Activated B cell treated with CpG ODN at 0.5 μM for 24 hours (primary cell): ENCODE measurements at regions of chr22 and their contacts with region 1.

Region 1: DNA sequence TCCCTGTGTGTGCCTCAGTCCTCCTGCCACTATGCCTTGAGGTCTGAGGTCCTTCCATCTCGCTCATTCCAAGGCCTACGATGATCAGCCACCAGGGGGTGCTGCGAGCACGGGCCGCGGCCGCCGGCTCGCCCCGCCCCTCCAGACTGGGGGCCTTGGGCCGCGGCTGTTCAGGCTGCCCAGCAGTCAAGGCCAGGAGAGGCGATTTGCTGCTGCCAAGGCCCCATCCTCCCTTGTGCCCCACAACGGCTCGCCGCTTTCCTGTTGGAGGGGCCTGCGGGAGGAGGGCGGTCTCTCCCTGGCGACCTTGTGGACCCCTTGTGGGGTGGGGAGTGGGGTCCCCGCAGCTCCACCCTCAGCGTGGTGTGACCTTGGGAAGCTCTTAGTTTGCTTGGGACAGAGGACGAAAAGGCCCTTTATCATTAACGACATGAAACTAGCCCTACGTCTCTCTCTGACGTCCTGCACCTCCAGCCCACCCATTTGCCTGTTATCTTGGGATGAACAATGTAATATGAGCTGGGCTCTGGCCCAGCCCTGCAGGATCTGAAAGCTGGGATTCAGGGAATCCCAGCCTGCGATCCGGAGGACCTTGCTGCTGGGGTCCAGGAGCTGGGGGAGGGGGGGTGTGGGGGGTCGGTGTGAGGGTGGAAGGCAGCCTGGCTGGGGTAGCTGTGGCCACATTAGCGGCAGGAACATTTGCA is 5.3 kb upstream of the GALR3 start:
- DNase-seq: peak; percentile 89
- ATAC-seq: peak; percentile 84
- H3K4me3 Mint-ChIP-seq: peak overlapping the region; percentile 52
- H3K27ac Mint-ChIP-seq: no peak overlapping the region
- H3K4me1 Mint-ChIP-seq: peaks cover 23% of the 10 kb centered on the region
- H3K27me3 Mint-ChIP-seq: peaks cover 17% of the 10 kb centered on the region
- CTCF ChIP-seq: peak; percentile 32

Region 2: GRCh38 chr22:37166675-37167066 is 651.2 kb before region 1 on chr22:
- CTCF ChIA-PET with region 1: no interaction called
- POLR2A ChIA-PET with region 1: interaction called, 13 read pairs
- intact Hi-C with region 1: no loop called
- DNase-seq: peak; percentile 73
- ATAC-seq: peak; percentile 44
- H3K4me3 Mint-ChIP-seq: peak overlapping the region; percentile 7
- H3K27ac Mint-ChIP-seq: peak overlapping the region; percentile 21
- H3K4me1 Mint-ChIP-seq: peaks cover 39% of the 10 kb centered on the region
- H3K27me3 Mint-ChIP-seq: no peaks in the 10 kb centered on the region
- CTCF ChIP-seq: peak; percentile 69

Region 3: DNA sequence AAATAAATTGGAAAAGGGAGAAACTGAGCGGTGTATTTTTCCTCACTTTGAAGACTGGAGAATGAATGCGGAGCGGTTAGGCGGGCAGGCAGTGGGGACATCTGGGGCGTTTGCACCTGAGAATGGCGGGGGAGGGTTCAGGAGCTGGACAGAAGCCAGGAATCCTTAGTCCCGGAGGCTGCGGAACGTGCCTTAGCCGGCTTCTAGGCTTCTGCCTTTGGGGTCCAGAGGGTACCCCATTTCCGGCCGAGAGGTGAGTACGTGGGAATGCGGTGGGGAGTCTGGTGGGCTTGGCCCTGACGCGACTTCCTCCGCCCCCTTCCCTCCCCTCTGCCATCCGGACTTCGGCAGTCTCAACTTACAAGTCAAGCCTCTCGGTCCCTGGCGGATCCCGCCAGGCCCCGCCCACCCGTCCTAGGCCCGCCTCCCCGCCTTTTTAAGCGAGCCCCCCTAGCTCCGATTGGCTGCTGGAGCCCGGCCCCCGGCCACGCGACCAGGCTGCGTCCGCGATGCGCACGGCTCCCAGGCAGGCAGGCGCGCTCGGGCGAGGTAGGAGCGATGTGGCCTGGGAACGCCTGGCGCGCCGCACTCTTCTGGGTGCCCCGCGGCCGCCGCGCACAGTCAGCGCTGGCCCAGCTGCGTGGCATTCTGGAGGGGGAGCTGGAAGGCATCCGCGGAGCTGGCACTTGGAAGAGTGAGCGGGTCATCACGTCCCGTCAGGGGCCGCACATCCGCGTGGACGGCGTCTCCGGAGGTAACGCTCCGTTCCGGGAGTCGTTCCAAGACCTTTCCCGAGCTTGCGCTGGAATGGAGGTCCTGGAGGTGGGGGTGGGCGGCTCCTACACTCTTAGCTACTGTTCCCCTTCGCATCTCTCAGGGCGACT is 10.2 kb before region 1 on chr22 and contains the start of gene GCAT:
- CTCF ChIA-PET with region 1: interaction called, 21 read pairs
- POLR2A ChIA-PET with region 1: interaction called, 4 read pairs
- intact Hi-C with region 1: loop called (anchors 1 kb)
- DNase-seq: peak; percentile 73
- ATAC-seq: peak; percentile 98
- H3K4me3 Mint-ChIP-seq: peak within 1 kb of the TSS; percentile 70
- H3K27ac Mint-ChIP-seq: no peak within 1 kb of the TSS
- H3K4me1 Mint-ChIP-seq: peaks cover 43% of the 10 kb centered on the region
- H3K27me3 Mint-ChIP-seq: peaks cover 46% of the 10 kb centered on the region
- CTCF ChIP-seq: no peak
- total RNA-seq, gene GCAT: 0.40 and 0.83 TPM in 2 replicates

Region 4: DNA sequence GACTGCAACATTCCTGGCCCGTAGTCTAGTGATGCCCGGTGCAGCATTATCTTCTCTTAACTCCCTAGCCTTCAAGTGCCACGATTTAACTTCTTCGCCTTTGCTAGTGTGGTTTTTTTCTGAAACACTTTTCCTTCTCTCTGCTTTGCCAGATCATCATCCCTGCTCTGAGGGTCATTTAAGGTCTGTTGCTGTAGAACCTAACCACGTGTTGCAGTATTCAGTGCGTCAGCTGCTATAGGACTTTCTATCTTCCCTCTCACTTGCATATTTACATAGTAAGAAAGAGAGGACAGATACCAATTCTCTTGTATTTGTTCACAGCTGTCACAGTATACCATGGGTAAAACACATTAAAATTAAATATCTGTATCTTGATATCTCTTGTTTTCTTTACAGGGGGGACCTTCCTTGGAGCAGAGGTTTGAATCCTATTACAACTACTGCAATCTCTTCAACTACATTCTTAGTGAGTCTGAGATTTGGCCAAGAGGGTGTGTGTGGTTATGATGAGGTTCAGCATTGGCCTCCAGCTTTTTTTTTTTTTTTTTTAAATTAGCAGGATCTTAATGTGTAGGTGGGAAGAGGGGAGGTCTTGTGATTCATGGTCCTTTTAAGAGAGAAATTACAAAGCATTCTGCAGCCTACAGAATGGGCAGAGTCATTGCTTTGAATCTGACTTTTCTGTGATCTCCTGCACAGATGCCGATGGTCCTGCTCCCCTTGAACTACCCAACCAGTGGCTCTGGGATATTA is 44.9 kb after region 1 on chr22:
- CTCF ChIA-PET with region 1: interaction called, 81 read pairs
- POLR2A ChIA-PET with region 1: interaction called, 3 read pairs
- intact Hi-C with region 1: loop called (anchors 1 kb)
- DNase-seq: no peak
- ATAC-seq: no peak
- H3K4me3 Mint-ChIP-seq: no peak overlapping the region
- H3K27ac Mint-ChIP-seq: no peak overlapping the region
- H3K4me1 Mint-ChIP-seq: no peaks in the 10 kb centered on the region
- H3K27me3 Mint-ChIP-seq: no peaks in the 10 kb centered on the region
- CTCF ChIP-seq: no peak

Region 5: DNA sequence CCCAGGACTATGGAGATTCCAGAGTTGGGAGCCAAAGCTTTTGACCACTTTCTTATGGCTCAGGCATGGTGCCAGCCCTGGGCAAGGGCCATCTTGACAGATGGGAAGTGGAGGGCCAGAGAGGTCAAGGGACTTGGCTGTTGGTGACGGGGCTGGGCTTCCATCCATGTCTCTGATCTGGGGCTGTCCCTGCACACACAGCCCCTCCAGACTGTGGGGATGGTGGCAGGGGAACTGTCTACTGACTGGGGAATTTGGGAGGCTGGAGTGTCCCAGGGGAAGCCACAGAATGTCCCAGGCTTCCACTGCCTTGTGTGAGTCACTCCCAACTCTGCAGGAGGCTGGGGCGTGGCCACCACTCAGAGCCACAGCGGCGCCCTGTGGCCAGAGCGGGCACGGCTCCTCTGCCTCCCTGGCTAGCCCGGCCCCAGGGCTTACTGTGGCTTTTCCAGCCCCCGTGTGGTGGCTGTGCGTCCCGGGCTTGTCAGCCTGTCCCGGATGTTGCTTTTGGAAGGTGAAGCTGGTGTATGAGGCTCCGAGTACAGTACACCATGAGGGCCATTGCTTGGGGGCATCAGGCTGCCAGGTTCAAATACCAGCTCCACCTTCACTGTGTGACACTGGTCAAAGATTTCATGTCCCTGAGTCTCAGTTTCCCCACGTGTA is 116.0 kb after region 1 on chr22:
- CTCF ChIA-PET with region 1: interaction called, 4 read pairs
- POLR2A ChIA-PET with region 1: no interaction called
- intact Hi-C with region 1: loop called (anchors 1 kb)
- DNase-seq: peak; percentile 80
- ATAC-seq: peak; percentile 99
- H3K4me3 Mint-ChIP-seq: no peak overlapping the region
- H3K27ac Mint-ChIP-seq: no peak overlapping the region
- H3K4me1 Mint-ChIP-seq: peaks cover 19% of the 10 kb centered on the region
- H3K27me3 Mint-ChIP-seq: no peaks in the 10 kb centered on the region
- CTCF ChIP-seq: peak; percentile 81

Region 6: DNA sequence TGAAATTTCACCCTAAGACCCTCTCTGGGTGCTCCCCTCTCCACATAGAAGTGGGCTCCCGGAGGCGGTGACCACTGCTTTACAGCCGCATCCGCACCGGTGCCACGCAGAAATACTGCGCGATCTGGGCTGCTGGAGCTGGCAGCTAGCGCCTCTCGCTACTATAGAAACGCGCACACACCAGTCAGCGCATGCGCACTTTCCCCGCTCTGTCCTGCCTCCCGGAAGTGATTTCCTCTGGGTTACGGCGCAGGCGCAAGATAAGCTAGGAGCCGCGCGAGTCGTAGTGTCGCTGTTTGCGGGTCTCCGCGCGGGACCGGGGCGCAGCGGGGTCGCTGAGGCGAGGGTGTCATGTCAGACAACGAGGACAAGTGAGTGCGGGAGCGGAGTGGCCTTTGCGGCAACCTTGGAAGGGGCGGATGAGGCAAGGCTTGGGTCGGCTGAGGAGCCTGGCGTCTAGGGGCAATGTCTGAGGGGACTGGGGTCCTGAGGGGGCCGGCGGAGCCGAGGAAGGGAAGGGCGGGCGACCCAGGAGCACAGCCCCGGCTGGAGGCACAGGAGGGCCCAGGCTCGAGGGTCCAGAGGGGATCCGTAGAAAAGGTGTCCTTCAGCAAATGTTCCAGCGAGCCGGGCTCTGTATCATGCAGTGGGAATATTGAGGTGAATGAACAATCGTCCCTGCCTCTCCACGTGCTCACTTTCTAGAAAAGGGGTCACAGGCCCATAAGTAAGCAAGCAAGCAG is 135.8 kb after region 1 on chr22 and contains the starts of genes C22orf23 and POLR2F:
- CTCF ChIA-PET with region 1: interaction called, 10 read pairs
- POLR2A ChIA-PET with region 1: interaction called, 11 read pairs
- intact Hi-C with region 1: no loop called
- DNase-seq: peak; percentile 89
- ATAC-seq: peak; percentile 93
- H3K4me3 Mint-ChIP-seq: peak within 1 kb of the TSS; percentile 100
- H3K27ac Mint-ChIP-seq: peak within 1 kb of the TSS; percentile 95
- H3K4me1 Mint-ChIP-seq: peaks cover 30% of the 10 kb centered on the region
- H3K27me3 Mint-ChIP-seq: peaks cover 14% of the 10 kb centered on the region
- CTCF ChIP-seq: no peak
- total RNA-seq, gene C22orf23: 0.16 TPM in 1 of 2 replicates, not detected in the other
- total RNA-seq, gene POLR2F: 47.8 and 67.3 TPM in 2 replicates

Region 7: GRCh38 chr22:37965940-37966664 is 148.2 kb after region 1 on chr22:
- CTCF ChIA-PET with region 1: interaction called, 10 read pairs
- POLR2A ChIA-PET with region 1: no interaction called
- intact Hi-C with region 1: no loop called
- DNase-seq: no peak
- ATAC-seq: no peak
- H3K4me3 Mint-ChIP-seq: no peak overlapping the region
- H3K27ac Mint-ChIP-seq: no peak overlapping the region
- H3K4me1 Mint-ChIP-seq: no peaks in the 10 kb centered on the region
- H3K27me3 Mint-ChIP-seq: no peaks in the 10 kb centered on the region
- CTCF ChIP-seq: no peak